ENCODE measurements at regions of chr2 and their contacts with region 1.

Region 1: GRCh38 chr2:172102391-172103278 is at the start of gene DLX2:
- DNase-seq: peak in 5 of 9 donors; percentile 23 to 43 (median 32)
- ATAC-seq: peak; percentile 61
- H3K4me3 ChIP-seq: peak within 1 kb of the TSS; percentile 32
- H3K4me3 Mint-ChIP-seq: peak within 1 kb of the TSS; percentile 74 to 88 (median 82)
- H3K27ac ChIP-seq: no peak within 1 kb of the TSS
- H3K27ac Mint-ChIP-seq: peak within 1 kb of the TSS in 8 of 9 donors; percentile 11 to 89 (median 80)
- H3K4me1 ChIP-seq: peaks cover 41 to 62% of the 10 kb centered on the region in 2 donors
- H3K4me1 Mint-ChIP-seq: peaks cover 29 to 59% (median 49%) of the 10 kb centered on the region in 7 donors
- H3K27me3 ChIP-seq: peaks cover 48 to 83% of the 10 kb centered on the region in 2 donors
- H3K27me3 Mint-ChIP-seq: peaks cover 65 to 91% (median 70%) of the 10 kb centered on the region in 5 donors
- total RNA-seq, gene DLX2: 0.16 to 0.34 TPM in 2 of 5 experiments, not detected in the others

Region 2: DNA sequence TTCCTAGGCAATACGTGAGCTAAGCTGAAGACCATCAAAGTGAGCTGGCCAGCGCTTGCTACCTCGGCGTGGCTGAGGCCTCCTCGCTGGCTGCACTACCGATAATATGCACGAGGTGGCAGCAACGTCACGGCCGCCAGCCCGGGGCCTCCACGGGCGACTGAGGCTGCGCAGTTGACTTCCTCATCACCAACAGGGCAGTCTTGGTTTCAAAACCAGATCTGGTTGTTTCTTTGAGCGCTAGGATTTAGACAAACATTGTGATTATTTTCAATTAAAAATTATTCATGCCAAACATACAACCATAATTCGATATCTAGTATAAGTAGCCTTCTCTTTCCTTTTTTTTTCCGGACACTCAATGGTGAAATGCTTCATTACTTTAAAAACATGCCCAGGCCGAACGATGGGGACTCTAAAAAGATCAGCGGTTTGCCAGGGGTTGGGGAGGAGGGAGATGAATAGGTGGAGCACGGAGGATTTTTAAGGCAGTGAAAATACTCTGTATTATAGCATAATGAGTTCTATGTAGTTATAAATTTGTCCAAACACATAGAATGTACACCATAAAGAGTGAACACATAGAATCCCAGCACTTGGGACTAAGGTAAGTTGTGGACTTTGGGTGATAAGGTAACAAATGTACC is 528.4 kb before region 1 on chr2:
- CTCF ChIA-PET with region 1: no interaction called
- POLR2A ChIA-PET with region 1: no interaction called
- intact Hi-C with region 1: loop called (anchors 2 to 5 kb)
- DNase-seq: peak; percentile 50 to 84 (median 73)
- ATAC-seq: peak; percentile 99
- H3K4me3 ChIP-seq: no peak overlapping the region
- H3K4me3 Mint-ChIP-seq: peak overlapping the region in 6 of 10 donors; percentile 13 to 69 (median 16)
- H3K27ac ChIP-seq: no peak overlapping the region
- H3K27ac Mint-ChIP-seq: peak overlapping the region in 2 of 9 donors; percentile 31 to 60
- H3K4me1 ChIP-seq: peaks cover 0 to 3% of the 10 kb centered on the region in 2 donors
- H3K4me1 Mint-ChIP-seq: peaks cover 0 to 7% (median 6%) of the 10 kb centered on the region in 7 donors
- H3K27me3 ChIP-seq: no peaks in the 10 kb centered on the region
- H3K27me3 Mint-ChIP-seq: peaks cover 0 to 8% (median 0%) of the 10 kb centered on the region in 5 donors

Region 3: DNA sequence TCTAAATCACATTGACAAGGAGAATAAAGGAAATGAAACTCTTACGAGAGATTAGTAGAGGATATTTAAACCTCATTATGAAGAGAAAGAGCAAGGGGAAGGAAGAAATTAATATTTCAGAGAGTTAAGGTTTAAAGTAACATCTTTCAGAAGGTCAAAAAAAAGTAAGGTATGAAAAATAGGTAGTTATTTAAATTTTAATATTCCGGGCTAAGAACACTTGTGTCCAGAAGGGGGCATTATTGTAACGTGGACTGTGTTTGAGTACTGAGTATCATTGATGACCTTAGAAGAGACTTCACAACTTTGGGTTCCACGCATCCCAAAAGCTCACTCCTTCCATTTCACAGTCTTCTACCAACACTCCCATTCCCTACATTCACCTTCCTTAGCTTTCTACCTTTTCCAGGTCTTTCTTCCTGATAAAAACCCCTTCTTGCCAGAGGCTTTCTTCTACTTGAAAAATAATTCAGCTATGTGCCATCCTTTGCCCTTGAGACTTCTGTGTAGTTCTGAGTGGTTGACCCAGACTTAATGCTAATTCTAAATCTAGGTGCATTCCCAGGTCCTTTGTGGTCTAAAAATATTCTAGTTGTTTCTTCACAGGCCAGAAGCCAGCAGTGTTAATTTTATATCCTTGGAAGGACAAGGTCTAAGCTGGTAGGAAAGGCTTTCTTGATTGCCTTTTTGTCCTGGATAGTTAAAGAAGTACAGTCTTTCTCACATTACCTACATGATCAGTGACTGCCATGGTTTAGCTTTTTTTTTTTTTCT is 398.9 kb before region 1 on chr2:
- CTCF ChIA-PET with region 1: interaction called, 4 read pairs
- POLR2A ChIA-PET with region 1: no interaction called
- intact Hi-C with region 1: loop called (anchors 1 kb)
- DNase-seq: peak in 5 of 9 donors; percentile 10 to 35 (median 22)
- ATAC-seq: peak; percentile 61
- H3K4me3 ChIP-seq: no peak overlapping the region
- H3K4me3 Mint-ChIP-seq: no peak overlapping the region
- H3K27ac ChIP-seq: no peak overlapping the region
- H3K27ac Mint-ChIP-seq: peak overlapping the region in 6 of 9 donors; percentile 43 to 79 (median 66)
- H3K4me1 ChIP-seq: no peaks in the 10 kb centered on the region
- H3K4me1 Mint-ChIP-seq: peaks cover 2 to 34% (median 11%) of the 10 kb centered on the region in 7 donors
- H3K27me3 ChIP-seq: no peaks in the 10 kb centered on the region
- H3K27me3 Mint-ChIP-seq: no peaks in the 10 kb centered on the region

Region 4: DNA sequence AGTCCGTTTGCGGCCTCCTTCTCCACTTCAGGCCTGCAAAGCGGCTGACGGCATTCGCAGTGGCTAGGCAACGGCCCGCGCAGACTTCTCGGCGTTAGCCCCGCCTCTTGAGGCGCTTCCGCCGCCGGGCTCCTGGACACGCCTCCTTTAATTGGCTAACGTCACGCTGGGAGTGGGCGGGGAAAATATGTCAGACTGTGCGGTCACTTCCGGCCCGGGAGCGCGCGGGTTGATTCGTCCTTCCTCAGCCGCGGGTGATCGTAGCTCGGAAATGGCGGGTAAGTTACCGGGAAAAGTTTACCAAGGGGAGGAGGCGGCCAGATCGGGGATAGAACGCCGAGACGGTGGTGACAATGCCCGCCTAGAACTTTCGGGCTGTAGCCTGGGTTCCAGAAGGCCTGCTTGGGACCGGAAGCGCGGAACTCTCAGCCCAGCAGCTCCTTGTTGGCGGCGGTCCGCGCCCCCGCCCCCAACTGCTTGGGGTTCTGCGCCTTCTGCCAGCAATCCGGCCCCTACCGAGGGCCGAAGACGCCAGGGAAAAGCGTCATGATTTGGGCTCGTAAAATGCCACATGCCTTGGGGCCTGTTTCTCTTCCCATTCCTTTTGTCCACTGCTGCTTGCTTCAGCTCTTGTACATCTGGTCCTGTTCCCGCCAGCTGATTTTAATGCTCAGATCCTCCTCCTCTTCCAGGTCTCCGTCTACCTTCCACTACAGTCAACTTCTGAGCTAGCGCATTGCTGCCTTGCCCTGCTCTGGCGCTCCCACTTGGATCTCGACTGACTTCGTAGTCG is 180.2 kb before region 1 on chr2 and contains the start of gene HAT1:
- CTCF ChIA-PET with region 1: no interaction called
- POLR2A ChIA-PET with region 1: no interaction called
- intact Hi-C with region 1: loop called (anchors 1 to 5 kb)
- DNase-seq: peak; percentile 92 to 98 (median 97)
- ATAC-seq: peak; percentile 99
- H3K4me3 ChIP-seq: peak within 1 kb of the TSS; percentile 75
- H3K4me3 Mint-ChIP-seq: peak within 1 kb of the TSS; percentile 90 to 100 (median 99)
- H3K27ac ChIP-seq: peak within 1 kb of the TSS; percentile 93
- H3K27ac Mint-ChIP-seq: peak within 1 kb of the TSS; percentile 96 to 100 (median 99)
- H3K4me1 ChIP-seq: peaks cover 13 to 17% of the 10 kb centered on the region in 2 donors
- H3K4me1 Mint-ChIP-seq: peaks cover 20 to 50% (median 42%) of the 10 kb centered on the region in 7 donors
- H3K27me3 ChIP-seq: no peaks in the 10 kb centered on the region
- H3K27me3 Mint-ChIP-seq: no peaks in the 10 kb centered on the region
- total RNA-seq, gene HAT1: 22.1 to 55.4 (median 26.4) TPM

Region 5: DNA sequence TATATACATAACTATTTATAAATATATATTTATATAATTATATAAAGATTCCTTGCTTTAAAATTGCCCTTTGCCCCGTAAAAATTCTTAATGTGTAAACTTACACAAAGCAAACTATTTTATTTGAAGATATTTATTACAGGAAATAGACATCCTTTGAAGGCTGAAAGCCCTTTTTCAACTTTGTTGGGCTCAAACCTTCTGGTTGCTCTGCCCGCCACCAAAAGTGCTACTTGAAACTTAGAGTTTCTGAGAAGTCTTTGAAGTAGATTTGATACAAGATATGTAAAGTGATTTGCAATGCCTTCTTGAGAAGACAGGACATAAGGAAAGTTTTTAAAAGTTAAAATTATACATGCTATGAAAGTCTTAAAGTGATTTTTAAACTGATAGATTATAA is 139.4 kb before region 1 on chr2:
- CTCF ChIA-PET with region 1: no interaction called
- POLR2A ChIA-PET with region 1: no interaction called
- intact Hi-C with region 1: no loop called
- DNase-seq: no peak
- ATAC-seq: no peak
- H3K4me3 ChIP-seq: no peak overlapping the region
- H3K4me3 Mint-ChIP-seq: peak overlapping the region in 5 of 10 donors; percentile 2 to 12 (median 5)
- H3K27ac ChIP-seq: no peak overlapping the region
- H3K27ac Mint-ChIP-seq: peak overlapping the region in 1 of 9 donors; percentile 7
- H3K4me1 ChIP-seq: peaks cover 0 to 9% of the 10 kb centered on the region in 2 donors
- H3K4me1 Mint-ChIP-seq: peaks cover 15 to 47% (median 39%) of the 10 kb centered on the region in 7 donors
- H3K27me3 ChIP-seq: no peaks in the 10 kb centered on the region
- H3K27me3 Mint-ChIP-seq: no peaks in the 10 kb centered on the region

Region 6: DNA sequence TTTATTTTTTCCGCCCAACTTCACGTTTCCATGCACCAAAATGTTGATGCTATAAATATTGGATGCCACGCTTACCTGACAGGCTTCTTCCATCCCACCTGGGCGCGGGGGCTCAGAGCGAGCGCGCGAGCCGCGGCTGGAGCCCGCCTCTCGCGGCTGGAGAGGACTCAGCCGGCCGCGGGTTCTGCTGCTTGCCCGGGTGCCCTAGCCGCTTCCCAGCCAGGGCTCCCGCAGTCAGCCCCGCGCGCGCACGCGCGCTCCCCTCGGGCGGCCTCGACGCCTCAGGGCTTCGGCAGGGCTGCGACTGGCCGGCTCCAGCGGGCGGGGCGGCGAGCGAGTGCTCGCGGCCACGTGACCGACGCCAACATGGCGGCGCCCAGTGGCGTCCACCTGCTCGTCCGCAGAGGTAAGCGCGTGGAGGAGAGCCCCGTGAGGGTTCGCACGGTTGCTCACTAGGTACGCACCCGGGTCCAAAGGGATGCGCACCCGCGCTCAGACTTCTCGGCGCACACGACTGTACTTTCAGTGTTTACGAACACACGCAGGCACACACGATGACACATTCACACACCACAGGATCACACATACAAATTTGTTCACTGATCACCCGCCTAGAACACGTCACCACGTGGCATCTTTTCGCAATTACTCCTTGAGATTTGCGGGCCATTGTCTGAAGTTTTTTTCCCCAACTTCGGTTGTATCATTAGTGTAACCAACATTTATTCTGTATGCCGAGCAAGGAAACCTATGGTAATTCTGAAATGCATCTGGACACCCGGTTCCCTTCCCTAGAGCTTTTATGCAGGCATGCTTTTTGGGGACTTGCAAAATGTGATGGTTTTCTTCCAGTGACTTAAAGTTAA is 102.8 kb before region 1 on chr2 and contains the start of gene METAP1D:
- CTCF ChIA-PET with region 1: no interaction called
- POLR2A ChIA-PET with region 1: interaction called, 4 read pairs
- intact Hi-C with region 1: loop called in 1 of 2 experiments (anchors 2 kb)
- DNase-seq: peak; percentile 74 to 92 (median 82)
- ATAC-seq: peak; percentile 98
- H3K4me3 ChIP-seq: peak within 1 kb of the TSS; percentile 99
- H3K4me3 Mint-ChIP-seq: peak within 1 kb of the TSS; percentile 87 to 99 (median 96)
- H3K27ac ChIP-seq: peak within 1 kb of the TSS; percentile 61
- H3K27ac Mint-ChIP-seq: peak within 1 kb of the TSS; percentile 77 to 97 (median 93)
- H3K4me1 ChIP-seq: peaks cover 0 to 5% of the 10 kb centered on the region in 2 donors
- H3K4me1 Mint-ChIP-seq: peaks cover 5 to 24% (median 22%) of the 10 kb centered on the region in 7 donors
- H3K27me3 ChIP-seq: no peaks in the 10 kb centered on the region
- H3K27me3 Mint-ChIP-seq: peaks cover 6 to 23% (median 9%) of the 10 kb centered on the region in 5 donors
- total RNA-seq, gene METAP1D: 5.3 to 12.2 (median 11.6) TPM

Region 7: GRCh38 chr2:172200495-172201085 is 98.0 kb after region 1 on chr2:
- CTCF ChIA-PET with region 1: no interaction called
- POLR2A ChIA-PET with region 1: no interaction called
- intact Hi-C with region 1: no loop called
- DNase-seq: peak in 1 of 9 donors; percentile 9
- ATAC-seq: no peak
- H3K4me3 ChIP-seq: no peak overlapping the region
- H3K4me3 Mint-ChIP-seq: no peak overlapping the region
- H3K27ac ChIP-seq: no peak overlapping the region
- H3K27ac Mint-ChIP-seq: no peak overlapping the region
- H3K4me1 ChIP-seq: no peaks in the 10 kb centered on the region
- H3K4me1 Mint-ChIP-seq: peaks cover 4 to 24% (median 13%) of the 10 kb centered on the region in 7 donors
- H3K27me3 ChIP-seq: no peaks in the 10 kb centered on the region
- H3K27me3 Mint-ChIP-seq: peaks cover 0 to 8% (median 0%) of the 10 kb centered on the region in 5 donors